ENCODE measurements at regions of chr9 and their contacts with region 1.

Region 1: GRCh38 chr9:121313458-121314152 is 45.6 kb downstream of the GSN start:
- DNase-seq: no peak

Region 2: GRCh38 chr9:121278535-121279261 is 34.9 kb before region 1 on chr9:
- CTCF ChIA-PET with region 1: interaction called, 11 read pairs
- POLR2A ChIA-PET with region 1: no interaction called
- DNase-seq: peak; percentile 71

Region 3: GRCh38 chr9:121326130-121326838 is 12.7 kb after region 1 on chr9:
- CTCF ChIA-PET with region 1: no interaction called
- POLR2A ChIA-PET with region 1: no interaction called
- DNase-seq: no peak